GM12878 (cell line): ENCODE measurements at regions of chr7 and their contacts with region 1.

Region 1: GRCh38 chr7:148645898-148646297 is 52.8 kb upstream of the CUL1 start:
- DNase-seq: no peak
- ATAC-seq: no peak
- H3K4me3 ChIP-seq: no peak overlapping the region
- H3K27ac ChIP-seq: no peak overlapping the region
- H3K4me1 ChIP-seq: no peaks in the 10 kb centered on the region
- H3K27me3 ChIP-seq: peaks cover 0 to 2% of the 10 kb centered on the region in 2 experiments; a peak in 2 of 4 replicates
- CTCF ChIP-seq: no peak
- EP300 ChIP-seq: no peak
- POLR2A ChIP-seq: no peak
- RAD21 ChIP-seq: no peak

Region 2: GRCh38 chr7:148607151-148607661 is 38.7 kb before region 1 on chr7:
- CTCF ChIA-PET with region 1: no interaction called
- POLR2A ChIA-PET with region 1: no interaction called
- RAD21 ChIA-PET with region 1: no interaction called
- SMC1A ChIA-PET with region 1: no interaction called
- in situ Hi-C with region 1: no loop called
- intact Hi-C with region 1: loop called (anchors 1 kb)
- DNase-seq: no peak
- ATAC-seq: no peak
- H3K4me3 ChIP-seq: no peak overlapping the region
- H3K27ac ChIP-seq: no peak overlapping the region
- H3K4me1 ChIP-seq: no peaks in the 10 kb centered on the region
- H3K27me3 ChIP-seq: no peaks in the 10 kb centered on the region
- CTCF ChIP-seq: no peak
- EP300 ChIP-seq: no peak
- POLR2A ChIP-seq: no peak
- RAD21 ChIP-seq: no peak

Region 3: GRCh38 chr7:148633761-148634160 is 12.1 kb before region 1 on chr7:
- CTCF ChIA-PET with region 1: no interaction called
- POLR2A ChIA-PET with region 1: no interaction called
- RAD21 ChIA-PET with region 1: no interaction called
- SMC1A ChIA-PET with region 1: no interaction called
- in situ Hi-C with region 1: no loop called
- intact Hi-C with region 1: no loop called
- DNase-seq: no peak
- ATAC-seq: no peak
- H3K4me3 ChIP-seq: no peak overlapping the region
- H3K27ac ChIP-seq: no peak overlapping the region
- H3K4me1 ChIP-seq: no peaks in the 10 kb centered on the region; the same call in 1 of the 2 replicates
- H3K27me3 ChIP-seq: no peaks in the 10 kb centered on the region
- CTCF ChIP-seq: no peak
- EP300 ChIP-seq: no peak
- POLR2A ChIP-seq: no peak
- RAD21 ChIP-seq: no peak

Region 4: DNA sequence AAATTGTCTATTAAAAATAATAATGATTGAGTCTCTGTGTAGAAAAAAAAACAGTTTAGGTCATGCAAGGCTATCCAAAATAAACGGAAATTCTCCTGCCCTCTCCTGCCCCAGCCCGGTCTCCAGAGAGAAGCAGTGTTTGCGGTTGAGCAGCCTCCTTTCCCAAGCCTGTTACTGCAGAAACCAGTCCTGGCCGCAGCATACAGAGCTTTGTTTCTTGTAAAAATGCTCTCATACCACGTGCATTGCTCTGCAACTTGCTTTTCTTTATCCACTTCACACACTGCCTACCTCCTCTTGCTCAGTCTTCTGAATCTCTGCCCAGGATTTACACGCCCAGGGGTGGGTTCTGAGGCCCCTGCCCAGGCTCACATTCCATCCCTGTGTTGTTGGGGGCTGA is 18.4 kb after region 1 on chr7:
- CTCF ChIA-PET with region 1: no interaction called
- POLR2A ChIA-PET with region 1: no interaction called
- RAD21 ChIA-PET with region 1: no interaction called
- SMC1A ChIA-PET with region 1: no interaction called
- in situ Hi-C with region 1: no loop called
- intact Hi-C with region 1: no loop called
- DNase-seq: no peak
- ATAC-seq: no peak
- H3K4me3 ChIP-seq: no peak overlapping the region
- H3K27ac ChIP-seq: no peak overlapping the region
- H3K4me1 ChIP-seq: no peaks in the 10 kb centered on the region
- H3K27me3 ChIP-seq: no peaks in the 10 kb centered on the region
- CTCF ChIP-seq: no peak
- EP300 ChIP-seq: no peak
- POLR2A ChIP-seq: no peak
- RAD21 ChIP-seq: no peak